Psoas muscle (tissue), 8 donors: ENCODE measurements at regions of chr1 and their contacts with region 1.

Region 1: DNA sequence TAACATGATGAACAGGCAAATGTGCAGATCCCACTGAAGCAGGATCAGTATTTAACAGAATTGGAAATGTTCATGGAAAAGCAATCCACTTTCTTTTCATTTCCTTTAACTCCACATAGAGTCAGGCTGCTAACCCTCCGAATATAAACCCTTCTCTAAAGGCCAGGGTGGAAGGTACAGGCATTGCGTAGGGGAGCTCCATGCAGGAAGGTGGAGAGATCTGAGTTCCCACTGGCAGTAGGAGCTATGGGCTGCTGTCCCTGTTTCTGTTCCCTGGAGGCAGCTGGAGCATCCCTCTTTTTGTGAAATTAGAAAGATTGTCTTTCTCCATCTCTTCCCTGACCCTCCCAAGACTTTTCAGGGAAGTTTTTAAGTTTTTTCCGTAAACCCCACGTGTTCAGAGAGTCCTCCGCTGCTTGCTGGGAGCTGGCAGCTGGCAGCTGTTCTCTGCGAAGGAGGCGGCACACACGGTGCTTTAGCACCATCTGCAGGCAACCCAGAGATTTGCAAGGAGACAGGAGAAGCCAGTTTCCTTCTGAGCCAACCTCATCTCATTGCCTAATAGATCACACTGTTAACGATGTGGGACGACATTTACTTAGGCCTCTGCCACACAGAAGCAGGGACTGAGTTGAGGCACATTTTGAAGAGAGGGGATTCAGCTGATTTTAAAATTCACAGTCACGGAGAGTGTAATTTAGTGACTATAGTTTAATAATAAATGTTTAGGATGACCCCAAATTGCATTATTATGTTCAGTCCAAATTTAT is 55.4 kb upstream of the HOOK1 start:
- DNase-seq: peak; percentile 81 to 92
- ATAC-seq: peak; percentile 96 to 97 (median 97)
- H3K4me3 ChIP-seq: peak overlapping the region; percentile 51
- H3K27ac ChIP-seq: peak overlapping the region; percentile 79
- H3K4me1 ChIP-seq: peaks cover 12% of the 10 kb centered on the region
- H3K27me3 ChIP-seq: no peaks in the 10 kb centered on the region
- CTCF ChIP-seq: peak; percentile 98

Region 2: GRCh38 chr1:59707178-59707791 is 52.1 kb before region 1 on chr1:
- intact Hi-C with region 1: loop called (anchors 5 kb)
- DNase-seq: peak; percentile 55 to 69
- ATAC-seq: peak; percentile 75 to 85 (median 82)
- H3K4me3 ChIP-seq: no peak overlapping the region
- H3K27ac ChIP-seq: peak overlapping the region; percentile 78
- H3K4me1 ChIP-seq: peaks cover 55% of the 10 kb centered on the region
- H3K27me3 ChIP-seq: no peaks in the 10 kb centered on the region
- CTCF ChIP-seq: no peak